HCT116 (cell line): ENCODE measurements at regions of chr19 and their contacts with region 1.

Region 1: DNA sequence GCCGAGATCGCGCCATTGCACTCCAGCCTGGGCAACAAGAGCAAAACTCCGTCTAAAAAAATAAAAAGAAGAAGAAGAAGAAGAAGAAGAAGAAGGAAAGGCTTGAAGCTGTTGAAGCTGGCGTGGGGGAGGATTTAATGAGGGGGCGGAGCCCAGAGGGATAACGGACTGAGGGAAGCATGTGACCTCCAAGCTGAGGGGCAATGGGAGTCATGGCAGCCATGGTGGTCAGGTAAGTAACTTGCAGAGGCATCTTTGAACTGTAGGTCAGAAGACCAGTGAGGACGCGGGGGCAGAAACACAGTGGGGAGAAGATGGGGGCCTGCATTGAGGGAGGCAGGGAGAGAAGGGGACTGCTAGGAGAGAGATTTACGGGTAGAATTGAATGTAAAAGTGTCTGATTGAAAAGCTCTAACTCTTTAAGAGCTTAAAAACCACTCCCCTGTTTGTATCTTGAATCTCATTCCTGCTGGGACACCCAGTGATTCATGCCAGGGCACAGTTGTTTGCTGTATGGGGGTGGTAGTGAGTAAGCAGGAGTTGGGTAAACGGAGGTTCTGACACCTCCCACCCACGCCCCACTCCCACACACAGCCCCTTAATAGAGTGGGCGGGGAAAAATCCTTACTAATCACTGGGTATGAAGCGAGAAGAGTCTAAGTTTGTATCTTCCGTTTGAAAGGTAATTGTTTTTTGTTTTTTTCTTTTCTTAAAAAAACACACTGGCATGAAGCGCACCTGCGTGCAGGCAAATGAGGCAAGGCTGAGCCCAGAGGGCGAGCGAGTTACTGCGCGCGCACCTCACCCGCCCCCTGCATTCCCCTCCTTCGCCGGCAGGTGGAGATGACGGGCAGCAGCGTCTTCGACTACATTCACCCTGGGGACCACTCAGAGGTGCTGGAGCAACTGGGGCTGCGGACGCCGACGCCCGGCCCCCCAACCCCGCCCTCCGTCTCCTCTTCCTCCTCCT is 13.0 kb downstream of the TMEM160 start:
- DNase-seq: peak; percentile 67
- ATAC-seq: peak; percentile 90
- H3K4me3 ChIP-seq: peak overlapping the region; percentile 50 to 69
- H3K27ac ChIP-seq: peak overlapping the region; percentile 81
- H3K4me1 ChIP-seq: peaks cover 23 to 35% of the 10 kb centered on the region in 2 experiments
- H3K27me3 ChIP-seq: no peaks in the 10 kb centered on the region
- CTCF ChIP-seq: peak; percentile 70 to 84 (median 83)
- POLR2A ChIP-seq: peak; percentile 45
- RAD21 ChIP-seq: peak; percentile 72

Region 2: GRCh38 chr19:47013041-47013517 is 22.3 kb before region 1 on chr19:
- CTCF ChIA-PET with region 1: interaction called, 19 read pairs
- POLR2A ChIA-PET with region 1: no interaction called
- RAD21 ChIA-PET with region 1: no interaction called
- intact Hi-C with region 1: loop called (anchors 1 kb)
- DNase-seq: peak; percentile 40
- ATAC-seq: peak; percentile 97
- H3K4me3 ChIP-seq: peak overlapping the region in 1 of 2 experiments; percentile 10; a peak in 1 of 4 replicates
- H3K27ac ChIP-seq: no peak overlapping the region
- H3K4me1 ChIP-seq: peaks cover 4 to 11% of the 10 kb centered on the region in 2 experiments; a peak in 3 of 4 replicates
- H3K27me3 ChIP-seq: no peaks in the 10 kb centered on the region
- CTCF ChIP-seq: peak; percentile 93 to 98 (median 98)
- POLR2A ChIP-seq: no peak
- RAD21 ChIP-seq: peak; percentile 97